Activated CD8-positive, alpha-beta T cell treated with anti-CD3 and anti-CD28 coated beads, Interleukin-2, amount 10 ng/mL, durations not matched to agents 7 days and 5 days (primary cell): ENCODE measurements at regions of chr17 and their contacts with region 1.

Region 1: DNA sequence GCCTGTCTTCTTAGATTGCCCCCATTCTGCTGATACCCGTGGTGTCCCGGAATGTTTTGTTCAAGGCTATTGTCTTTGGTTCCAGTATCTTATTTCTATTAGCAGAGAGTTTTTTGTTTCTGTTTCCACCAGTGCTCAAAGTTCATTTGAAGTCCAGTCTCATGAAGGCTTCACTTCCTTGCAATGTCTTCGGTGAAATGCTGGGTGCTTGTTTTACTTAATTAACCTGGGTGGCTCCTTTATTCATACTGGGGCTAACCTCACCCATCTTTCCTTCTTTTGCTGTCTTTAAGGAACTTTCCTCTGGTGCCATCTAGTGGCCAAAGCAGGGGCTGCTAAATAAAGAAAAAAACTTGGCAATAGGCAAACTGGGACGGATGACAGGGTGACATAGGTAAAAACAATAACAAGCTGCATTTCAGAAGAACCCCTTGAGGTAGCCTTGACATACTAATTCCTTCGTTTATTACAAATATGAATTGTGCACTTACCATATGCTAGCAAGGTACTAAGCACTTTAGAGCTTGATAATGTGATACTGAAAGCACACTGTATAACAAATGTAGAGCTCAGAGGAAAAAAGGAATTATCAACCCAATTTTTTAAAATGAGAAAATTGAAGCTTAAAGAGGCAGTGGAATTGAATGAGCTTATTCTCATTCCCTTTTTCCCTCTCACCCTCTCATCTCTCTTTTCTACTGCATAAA is 2.8 kb upstream of the SMIM36 start:
- DNase-seq: peak; percentile 84
- ATAC-seq: peak; percentile 76
- H3K4me3 Mint-ChIP-seq: no peak overlapping the region
- H3K27ac Mint-ChIP-seq: no peak overlapping the region
- H3K4me1 Mint-ChIP-seq: peaks cover 6% of the 10 kb centered on the region
- H3K27me3 Mint-ChIP-seq: peaks cover 14% of the 10 kb centered on the region

Region 2: DNA sequence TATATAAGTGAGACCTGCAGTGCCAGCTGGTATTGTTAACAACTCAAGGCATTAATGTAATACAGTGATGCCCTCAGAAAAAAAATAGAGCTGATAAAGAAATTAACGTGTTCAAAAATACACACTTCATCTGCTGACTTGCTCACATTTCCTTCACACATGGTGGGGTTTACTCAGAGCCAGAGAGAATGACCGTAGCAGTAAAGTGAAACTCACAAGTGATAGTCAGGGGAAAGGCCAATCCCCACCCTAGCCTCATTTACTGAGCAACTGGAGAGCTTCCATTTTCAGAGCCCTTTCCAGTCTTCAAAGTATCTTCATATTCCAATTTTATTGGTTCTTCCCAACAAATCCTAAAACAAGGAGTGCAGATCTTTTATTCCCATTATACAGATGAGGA is 323.3 kb before region 1 on chr17:
- CTCF ChIA-PET with region 1: no interaction called
- POLR2A ChIA-PET with region 1: no interaction called
- DNase-seq: no peak
- ATAC-seq: no peak
- H3K4me3 Mint-ChIP-seq: no peak overlapping the region
- H3K27ac Mint-ChIP-seq: no peak overlapping the region
- H3K4me1 Mint-ChIP-seq: no peaks in the 10 kb centered on the region
- H3K27me3 Mint-ChIP-seq: peaks cover 7% of the 10 kb centered on the region

Region 3: DNA sequence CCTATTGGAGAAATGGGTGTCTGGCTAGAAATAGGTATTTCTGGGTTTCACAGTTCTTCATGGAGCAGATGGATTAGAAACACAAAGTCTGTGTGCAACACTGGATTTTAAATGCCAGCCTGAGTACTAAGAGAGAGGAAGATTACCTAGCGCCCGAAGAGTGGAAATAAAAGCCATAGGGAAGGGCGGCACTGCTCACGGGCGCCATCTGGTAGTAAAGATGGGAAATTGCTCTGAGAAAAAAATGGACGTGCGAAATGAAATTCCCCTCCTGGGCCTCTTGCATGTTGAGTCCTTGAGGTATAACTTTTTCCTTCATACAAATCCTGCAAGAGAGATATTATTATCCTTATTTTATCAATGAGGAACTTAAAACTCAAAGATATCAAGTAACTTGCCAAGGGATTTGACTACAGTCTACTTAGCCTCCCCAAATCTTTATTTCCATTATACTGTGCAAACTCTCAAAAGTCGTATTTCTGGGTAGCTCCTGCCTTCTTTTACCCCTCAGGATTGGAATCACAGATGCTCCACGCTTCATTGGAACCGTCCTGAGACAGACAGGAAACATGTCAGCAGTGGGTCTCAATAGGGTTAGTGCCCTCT is 165.2 kb before region 1 on chr17:
- CTCF ChIA-PET with region 1: interaction called, 11 read pairs
- POLR2A ChIA-PET with region 1: no interaction called
- DNase-seq: peak; percentile 62
- ATAC-seq: no peak
- H3K4me3 Mint-ChIP-seq: no peak overlapping the region
- H3K27ac Mint-ChIP-seq: no peak overlapping the region
- H3K4me1 Mint-ChIP-seq: peaks cover 65% of the 10 kb centered on the region
- H3K27me3 Mint-ChIP-seq: no peaks in the 10 kb centered on the region

Region 4: GRCh38 chr17:55356434-55357328 is 157.4 kb before region 1 on chr17:
- CTCF ChIA-PET with region 1: interaction called, 14 read pairs
- POLR2A ChIA-PET with region 1: no interaction called
- DNase-seq: peak; percentile 87
- ATAC-seq: peak; percentile 88
- H3K4me3 Mint-ChIP-seq: no peak overlapping the region
- H3K27ac Mint-ChIP-seq: no peak overlapping the region
- H3K4me1 Mint-ChIP-seq: peaks cover 11% of the 10 kb centered on the region
- H3K27me3 Mint-ChIP-seq: peaks cover 27% of the 10 kb centered on the region

Region 5: GRCh38 chr17:55388842-55389241 is 125.2 kb before region 1 on chr17:
- CTCF ChIA-PET with region 1: interaction called, 13 read pairs
- POLR2A ChIA-PET with region 1: no interaction called
- DNase-seq: no peak
- ATAC-seq: no peak
- H3K4me3 Mint-ChIP-seq: no peak overlapping the region
- H3K27ac Mint-ChIP-seq: no peak overlapping the region
- H3K4me1 Mint-ChIP-seq: no peaks in the 10 kb centered on the region
- H3K27me3 Mint-ChIP-seq: no peaks in the 10 kb centered on the region

Region 6: DNA sequence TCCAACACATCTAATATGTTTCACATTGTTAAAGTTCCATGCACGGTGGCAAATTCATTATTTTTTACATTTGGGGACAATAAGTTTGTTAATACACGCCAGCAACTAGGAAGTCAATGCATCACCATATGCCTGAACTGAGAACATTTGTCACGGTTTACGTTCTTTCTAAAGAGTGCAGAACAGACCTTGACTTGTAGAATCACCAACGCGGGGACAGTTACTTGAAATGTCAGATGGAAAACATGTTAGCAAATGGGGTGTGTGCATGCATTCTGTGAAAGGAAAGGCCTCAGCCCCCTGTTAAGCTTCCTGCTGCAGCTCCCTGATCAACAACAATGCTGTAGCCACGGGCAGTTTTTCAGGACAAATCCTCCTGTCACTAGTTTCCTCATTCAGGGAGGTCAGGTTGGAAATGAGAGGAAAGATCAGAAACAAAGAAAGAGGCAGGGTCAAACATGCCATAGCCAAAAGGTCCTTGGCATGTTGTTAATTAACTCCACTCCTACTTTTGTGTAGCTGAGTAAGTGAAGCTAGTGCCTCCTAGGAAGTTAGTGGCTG is 21.2 kb before region 1 on chr17:
- CTCF ChIA-PET with region 1: no interaction called
- POLR2A ChIA-PET with region 1: no interaction called
- DNase-seq: no peak
- ATAC-seq: no peak
- H3K4me3 Mint-ChIP-seq: no peak overlapping the region
- H3K27ac Mint-ChIP-seq: no peak overlapping the region
- H3K4me1 Mint-ChIP-seq: no peaks in the 10 kb centered on the region
- H3K27me3 Mint-ChIP-seq: peaks cover 16% of the 10 kb centered on the region